ENCODE measurements at regions of chr9 and their contacts with region 1.

Region 1: GRCh38 chr9:99231711-99232110 is 9.6 kb downstream of the SEC61B start:
- DNase-seq: peak; percentile 61
- ATAC-seq: peak; percentile 71
- H3K4me3 Mint-ChIP-seq: no peak overlapping the region
- H3K27ac Mint-ChIP-seq: no peak overlapping the region
- H3K4me1 Mint-ChIP-seq: peaks cover 11% of the 10 kb centered on the region
- H3K27me3 Mint-ChIP-seq: no peaks in the 10 kb centered on the region

Region 2: GRCh38 chr9:99184475-99185347 is 47.0 kb before region 1 on chr9:
- CTCF ChIA-PET with region 1: interaction called, 58 read pairs
- POLR2A ChIA-PET with region 1: no interaction called
- DNase-seq: peak; percentile 87
- ATAC-seq: peak; percentile 77
- H3K4me3 Mint-ChIP-seq: no peak overlapping the region
- H3K27ac Mint-ChIP-seq: peak overlapping the region; percentile 82
- H3K4me1 Mint-ChIP-seq: peaks cover 64% of the 10 kb centered on the region
- H3K27me3 Mint-ChIP-seq: no peaks in the 10 kb centered on the region

Region 3: DNA sequence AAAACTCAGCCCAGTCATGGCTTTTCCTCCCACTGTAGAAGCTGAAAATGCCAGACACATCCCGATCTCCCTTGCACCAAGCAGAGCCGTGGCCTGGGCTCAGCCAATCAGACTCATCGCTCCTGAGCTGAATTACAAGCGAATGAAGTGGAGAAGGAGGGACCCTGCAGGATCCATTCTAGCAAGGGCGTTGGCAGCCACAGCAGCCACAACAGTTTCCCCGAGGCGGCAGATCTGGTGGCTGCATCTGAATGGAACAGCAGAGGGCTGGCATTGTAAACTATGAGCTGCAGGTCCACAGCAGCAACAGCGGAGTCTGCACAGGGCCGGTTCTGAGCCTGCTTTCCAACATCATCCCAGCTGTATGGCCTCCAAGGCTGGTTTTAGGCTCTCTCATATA is 33.7 kb before region 1 on chr9:
- CTCF ChIA-PET with region 1: interaction called, 17 read pairs
- POLR2A ChIA-PET with region 1: no interaction called
- DNase-seq: no peak
- ATAC-seq: no peak
- H3K4me3 Mint-ChIP-seq: no peak overlapping the region
- H3K27ac Mint-ChIP-seq: no peak overlapping the region
- H3K4me1 Mint-ChIP-seq: peaks cover 23% of the 10 kb centered on the region
- H3K27me3 Mint-ChIP-seq: no peaks in the 10 kb centered on the region

Region 4: DNA sequence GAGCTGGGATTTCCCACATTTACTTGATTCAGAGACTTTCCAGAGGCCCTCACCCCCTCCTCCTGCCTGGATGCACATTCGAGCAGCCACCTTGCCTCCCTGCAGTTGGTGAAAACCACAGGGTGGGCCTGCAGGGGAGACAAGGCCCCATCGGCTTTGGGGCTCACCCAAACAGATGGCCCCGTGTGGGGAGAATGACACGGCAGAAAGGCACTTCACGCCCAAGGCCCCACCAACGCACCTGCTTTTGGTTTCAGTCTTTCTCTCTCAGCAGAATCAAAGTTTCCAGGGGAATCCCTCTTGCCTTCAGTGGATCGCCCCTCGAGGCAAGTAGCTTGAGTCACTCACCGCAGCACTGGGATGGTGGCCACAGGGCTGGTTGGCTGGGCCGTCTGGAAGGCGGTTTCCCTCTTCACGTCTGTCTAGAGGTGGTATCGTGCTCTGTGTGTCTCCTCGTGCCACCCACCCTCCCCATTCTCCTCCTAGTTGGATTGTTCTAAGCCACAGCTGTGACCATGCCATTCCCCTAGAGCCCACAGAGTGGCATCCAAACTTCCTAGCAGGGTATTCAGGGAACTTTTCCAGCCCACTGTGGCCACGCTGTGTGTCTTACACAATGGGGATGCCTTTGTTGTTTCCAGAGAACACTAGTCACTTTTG is 22.2 kb after region 1 on chr9:
- CTCF ChIA-PET with region 1: interaction called, 71 read pairs
- POLR2A ChIA-PET with region 1: interaction called, 4 read pairs
- DNase-seq: peak; percentile 83
- ATAC-seq: peak; percentile 89
- H3K4me3 Mint-ChIP-seq: peak overlapping the region; percentile 68
- H3K27ac Mint-ChIP-seq: peak overlapping the region; percentile 87
- H3K4me1 Mint-ChIP-seq: peaks cover 31% of the 10 kb centered on the region
- H3K27me3 Mint-ChIP-seq: no peaks in the 10 kb centered on the region

Region 5: DNA sequence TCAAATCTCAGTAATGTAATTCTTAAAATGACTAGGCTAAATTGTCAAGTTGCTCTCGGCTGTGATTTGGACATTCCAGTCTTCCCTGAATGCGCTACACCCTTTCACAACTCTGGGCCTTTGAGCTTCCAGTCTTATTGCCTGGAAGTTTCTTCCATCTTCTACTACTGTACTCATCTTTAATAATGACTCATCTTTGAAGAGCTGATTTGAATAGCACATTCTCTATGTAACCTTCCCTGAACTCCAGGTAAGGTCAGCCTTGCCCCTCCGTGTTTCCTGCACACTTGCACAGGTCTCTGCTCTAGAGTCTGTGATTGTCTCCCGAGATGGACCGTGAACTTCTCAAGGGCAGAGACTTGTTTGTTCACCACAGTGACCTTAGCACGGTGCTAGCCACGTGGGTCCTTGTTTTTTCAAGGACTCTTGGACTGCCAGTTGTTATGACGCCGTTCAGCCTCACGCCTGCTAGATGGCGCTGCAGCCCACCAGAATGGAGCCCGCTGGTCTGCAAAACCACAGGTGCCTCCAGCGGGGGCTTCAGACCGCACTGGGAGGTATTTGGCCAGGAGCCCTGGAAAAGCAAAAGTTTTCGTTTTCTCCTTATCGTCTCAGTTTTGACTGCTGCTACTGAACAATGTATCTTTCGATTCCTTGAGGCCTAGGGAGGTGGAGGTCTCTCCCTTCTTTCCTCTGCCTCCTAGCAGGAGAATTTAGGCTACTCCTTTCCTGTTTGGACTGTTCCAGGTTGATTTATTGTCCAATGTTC is 34.7 kb after region 1 on chr9:
- CTCF ChIA-PET with region 1: interaction called, 21 read pairs
- POLR2A ChIA-PET with region 1: no interaction called
- DNase-seq: peak; percentile 77
- ATAC-seq: peak; percentile 84
- H3K4me3 Mint-ChIP-seq: no peak overlapping the region
- H3K27ac Mint-ChIP-seq: no peak overlapping the region
- H3K4me1 Mint-ChIP-seq: peaks cover 11% of the 10 kb centered on the region
- H3K27me3 Mint-ChIP-seq: peaks cover 7% of the 10 kb centered on the region

Measured in activated CD8-positive, alpha-beta T cell treated with anti-CD3 and anti-CD28 coated beads, Interleukin-2, amount 10 ng/mL, durations not matched to agents 7 days and 5 days (primary cell).